ENCODE measurements at regions of chr17 and their contacts with region 1.

Region 1: GRCh38 chr17:80008383-80008840 is 27.3 kb downstream of the TBC1D16 start:
- DNase-seq: peak in 1 of 2 donors; percentile 86
- H3K4me3 ChIP-seq: no peak overlapping the region
- H3K27ac ChIP-seq: no peak overlapping the region
- H3K4me1 ChIP-seq: peaks cover 0 to 9% of the 10 kb centered on the region in 2 donors
- H3K27me3 ChIP-seq: no peaks in the 10 kb centered on the region
- CTCF ChIP-seq: peak; percentile 95 to 97 (median 95)

Region 2: DNA sequence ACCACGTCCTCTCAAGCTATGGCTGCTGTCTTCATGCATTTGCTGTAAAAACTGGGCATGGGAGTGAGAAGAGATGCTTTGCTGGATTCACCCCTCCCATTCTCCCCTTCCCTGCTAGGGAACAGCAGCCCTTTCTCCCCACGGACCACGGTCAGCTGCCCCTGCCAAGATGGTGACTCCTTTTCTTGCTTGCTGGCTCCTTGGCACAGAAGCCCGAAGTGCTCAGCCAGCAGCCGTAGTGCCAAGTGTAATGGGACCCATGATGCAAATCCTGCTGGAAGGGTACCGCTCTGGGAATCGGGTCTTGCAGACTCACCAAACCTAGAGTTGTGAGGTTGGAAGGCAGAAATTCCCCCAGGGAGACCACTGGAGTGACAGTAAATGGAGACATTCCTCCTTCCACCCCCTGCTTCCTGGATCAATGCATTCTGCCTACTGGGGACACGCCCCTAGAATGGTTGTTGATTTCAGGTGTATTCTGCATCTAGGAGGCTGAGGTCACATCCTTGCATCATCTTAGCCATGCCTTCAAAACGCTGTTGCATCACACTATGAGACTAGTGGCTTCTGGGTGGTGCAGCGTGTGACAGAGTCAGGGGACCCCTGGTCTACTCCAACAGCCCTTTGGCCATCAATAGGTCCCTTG is 106.1 kb before region 1 on chr17:
- intact Hi-C with region 1: no loop called
- DNase-seq: no peak
- H3K4me3 ChIP-seq: no peak overlapping the region
- H3K27ac ChIP-seq: no peak overlapping the region
- H3K4me1 ChIP-seq: no peaks in the 10 kb centered on the region
- H3K27me3 ChIP-seq: no peaks in the 10 kb centered on the region
- CTCF ChIP-seq: no peak

Region 3: DNA sequence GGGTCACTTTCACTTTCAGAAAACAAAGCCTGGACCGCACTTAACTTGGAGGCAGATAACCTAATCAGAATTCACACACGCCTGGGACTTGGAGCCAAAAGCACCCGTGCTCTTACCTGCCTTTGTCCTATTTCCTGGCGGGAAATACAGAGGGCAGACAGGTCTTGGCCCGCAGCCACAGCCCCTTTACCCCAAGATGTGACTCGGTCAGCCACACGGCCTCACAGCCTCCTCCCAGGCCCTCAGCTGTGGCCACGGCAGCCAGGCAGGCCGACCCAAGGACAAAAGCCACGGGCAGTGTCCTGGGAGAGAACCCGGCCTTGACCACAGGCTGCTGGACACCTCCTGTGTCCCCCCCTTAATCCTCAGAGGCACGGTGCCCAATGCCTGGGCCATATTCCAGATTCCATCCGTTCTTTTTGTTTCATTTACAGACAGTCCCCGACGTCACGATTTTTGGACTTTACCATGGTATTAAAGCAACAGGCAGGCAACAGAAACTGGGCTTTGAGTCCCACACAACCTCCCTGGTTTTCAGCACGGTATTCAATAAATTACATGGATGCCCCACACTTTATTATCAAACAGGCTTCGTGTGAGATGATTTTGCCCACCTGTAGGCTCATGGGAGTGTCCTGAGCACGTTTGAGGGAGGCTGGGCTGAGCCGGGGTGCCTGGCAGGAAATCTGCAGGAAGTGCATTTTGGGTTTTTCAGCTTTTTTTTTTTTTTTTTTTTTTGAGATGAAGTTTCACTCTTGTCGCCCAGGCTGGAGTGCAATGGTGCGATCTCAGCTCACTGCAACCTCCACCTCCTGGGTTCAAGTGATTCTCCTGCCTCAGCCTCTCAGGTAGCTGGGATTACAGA is 62.9 kb after region 1 on chr17:
- intact Hi-C with region 1: loop called (anchors 2 kb)
- DNase-seq: peak in 1 of 2 donors; percentile 86
- H3K4me3 ChIP-seq: peak overlapping the region; percentile 50 to 62
- H3K27ac ChIP-seq: peak overlapping the region; percentile 83 to 87
- H3K4me1 ChIP-seq: peaks cover 3 to 12% of the 10 kb centered on the region in 2 donors
- H3K27me3 ChIP-seq: no peaks in the 10 kb centered on the region
- CTCF ChIP-seq: no peak